Caco-2 (cell line): ENCODE measurements at regions of chr2 and their contacts with region 1.

Region 1: GRCh38 chr2:38274286-38275276 is 102.5 kb downstream of the ATL2 start:
- DNase-seq: peak in 1 of 2 experiments; percentile 69
- H3K4me3 ChIP-seq: no peak overlapping the region
- H3K4me3 Mint-ChIP-seq: no peak overlapping the region
- H3K27ac Mint-ChIP-seq: peak overlapping the region; percentile 70
- H3K4me1 ChIP-seq: peaks cover 44% of the 10 kb centered on the region
- H3K4me1 Mint-ChIP-seq: peaks cover 51% of the 10 kb centered on the region
- H3K27me3 ChIP-seq: no peaks in the 10 kb centered on the region
- H3K27me3 Mint-ChIP-seq: no peaks in the 10 kb centered on the region
- CTCF ChIP-seq: peak; percentile 62 to 69

Region 2: DNA sequence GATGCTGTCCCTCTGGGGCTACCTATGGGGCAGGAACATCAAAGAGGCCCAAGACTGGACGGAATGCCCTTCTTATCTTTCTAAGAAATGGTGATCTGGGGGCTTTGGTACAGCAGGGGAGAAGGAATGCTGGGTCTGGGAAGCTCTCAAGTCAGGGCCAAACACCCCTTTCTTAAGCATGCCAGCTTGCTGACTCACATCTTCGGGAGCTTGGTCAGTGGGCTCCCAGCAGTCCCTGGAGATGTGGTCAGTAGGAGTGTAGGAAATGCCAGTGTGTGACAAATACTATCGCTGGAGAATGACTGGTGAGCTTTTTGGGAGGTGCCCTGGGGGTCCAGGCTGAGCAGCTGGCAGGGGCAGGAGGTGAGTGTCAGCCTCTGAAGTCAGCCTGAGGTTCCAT is 498.1 kb before region 1 on chr2:
- CTCF ChIA-PET with region 1: no interaction called
- POLR2A ChIA-PET with region 1: interaction called, 12 read pairs
- intact Hi-C with region 1: no loop called
- DNase-seq: peak; percentile 29 to 65
- H3K4me3 ChIP-seq: no peak overlapping the region
- H3K4me3 Mint-ChIP-seq: no peak overlapping the region
- H3K27ac Mint-ChIP-seq: peak overlapping the region; percentile 58
- H3K4me1 ChIP-seq: peaks cover 70% of the 10 kb centered on the region
- H3K4me1 Mint-ChIP-seq: peaks cover 68% of the 10 kb centered on the region
- H3K27me3 ChIP-seq: no peaks in the 10 kb centered on the region
- H3K27me3 Mint-ChIP-seq: no peaks in the 10 kb centered on the region
- CTCF ChIP-seq: no peak

Region 3: DNA sequence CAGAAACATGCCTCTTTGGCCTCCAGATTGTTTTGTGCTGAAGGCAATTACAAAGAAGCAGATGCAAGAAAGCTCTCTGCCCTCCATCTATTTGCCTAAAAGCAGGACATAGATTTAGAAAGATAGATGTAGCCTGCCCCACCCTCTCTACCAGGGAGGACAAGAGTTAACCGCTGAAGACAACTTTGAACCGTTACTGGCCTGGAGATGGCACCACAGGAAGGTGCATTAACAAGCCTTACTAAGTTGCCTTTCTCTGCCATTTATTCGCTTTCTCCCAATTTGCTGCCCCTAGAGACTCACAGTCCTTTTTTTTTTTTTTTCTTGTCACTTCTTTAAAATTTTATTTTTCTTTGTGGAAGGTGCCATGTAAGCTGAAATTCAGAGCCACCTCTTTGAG is 378.3 kb before region 1 on chr2:
- CTCF ChIA-PET with region 1: interaction called, 3 read pairs
- POLR2A ChIA-PET with region 1: no interaction called
- intact Hi-C with region 1: loop called (anchors 1 kb)
- DNase-seq: peak in 1 of 2 experiments; percentile 14
- H3K4me3 ChIP-seq: no peak overlapping the region
- H3K4me3 Mint-ChIP-seq: no peak overlapping the region
- H3K27ac Mint-ChIP-seq: no peak overlapping the region
- H3K4me1 ChIP-seq: peaks cover 19% of the 10 kb centered on the region
- H3K4me1 Mint-ChIP-seq: peaks cover 10% of the 10 kb centered on the region
- H3K27me3 ChIP-seq: no peaks in the 10 kb centered on the region
- H3K27me3 Mint-ChIP-seq: no peaks in the 10 kb centered on the region
- CTCF ChIP-seq: no peak

Region 4: DNA sequence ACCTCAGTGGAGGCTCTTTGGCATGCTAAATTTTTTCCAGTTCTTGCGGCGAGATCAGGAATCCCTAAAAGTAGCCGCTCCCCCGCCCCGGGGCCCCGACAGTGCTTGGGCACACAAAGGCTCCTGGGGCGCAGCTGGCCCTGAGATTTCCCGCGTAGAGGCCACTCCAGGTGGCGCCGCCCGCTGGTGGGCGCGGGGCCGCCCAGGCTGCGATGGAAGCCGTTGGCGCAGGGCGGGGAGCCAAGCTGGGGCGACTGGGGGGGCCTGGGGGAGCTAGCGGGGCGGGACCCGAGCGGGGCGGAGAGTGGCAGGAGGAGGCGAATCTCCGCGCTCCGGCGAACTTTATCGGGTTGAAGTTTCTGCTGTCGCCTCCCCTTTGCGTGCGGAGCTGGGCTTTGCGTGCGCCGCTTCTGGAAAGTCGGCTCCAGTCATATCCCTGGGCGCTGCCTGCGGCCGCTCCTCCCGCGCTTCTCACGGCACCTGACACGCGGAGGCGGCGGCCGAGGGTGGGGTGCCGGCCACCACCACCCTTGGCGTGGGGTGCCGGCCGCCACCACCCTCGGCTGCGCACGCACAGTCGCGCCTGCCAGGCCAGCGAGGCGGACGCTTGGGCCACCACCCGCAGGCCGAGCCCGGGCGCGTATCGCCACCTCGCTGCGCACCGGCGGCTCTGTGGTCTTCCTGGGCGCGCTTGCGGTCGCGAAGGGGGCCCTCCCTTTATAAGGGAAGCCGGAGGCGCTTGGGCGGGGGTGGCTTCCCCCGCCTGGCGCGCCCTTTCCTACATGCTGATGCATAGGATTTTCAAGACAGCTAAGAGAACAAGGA is 197.8 kb before region 1 on chr2:
- CTCF ChIA-PET with region 1: interaction called, 37 read pairs
- POLR2A ChIA-PET with region 1: interaction called, 3 read pairs
- intact Hi-C with region 1: loop called (anchors 2 kb)
- DNase-seq: peak; percentile 79 to 84
- H3K4me3 ChIP-seq: peak overlapping the region; percentile 56
- H3K4me3 Mint-ChIP-seq: peak overlapping the region; percentile 84
- H3K27ac Mint-ChIP-seq: peak overlapping the region; percentile 76
- H3K4me1 ChIP-seq: peaks cover 24% of the 10 kb centered on the region
- H3K4me1 Mint-ChIP-seq: peaks cover 38% of the 10 kb centered on the region
- H3K27me3 ChIP-seq: no peaks in the 10 kb centered on the region
- H3K27me3 Mint-ChIP-seq: no peaks in the 10 kb centered on the region
- CTCF ChIP-seq: peak; percentile 1 to 53

Region 5: GRCh38 chr2:38115216-38116032 is 159.2 kb before region 1 on chr2:
- CTCF ChIA-PET with region 1: interaction called, 15 read pairs
- POLR2A ChIA-PET with region 1: no interaction called
- intact Hi-C with region 1: loop called (anchors 1 kb)
- DNase-seq: peak; percentile 86 to 90
- H3K4me3 ChIP-seq: no peak overlapping the region
- H3K4me3 Mint-ChIP-seq: no peak overlapping the region
- H3K27ac Mint-ChIP-seq: no peak overlapping the region
- H3K4me1 ChIP-seq: peaks cover 7% of the 10 kb centered on the region
- H3K4me1 Mint-ChIP-seq: peaks cover 6% of the 10 kb centered on the region
- H3K27me3 ChIP-seq: no peaks in the 10 kb centered on the region
- H3K27me3 Mint-ChIP-seq: no peaks in the 10 kb centered on the region
- CTCF ChIP-seq: peak; percentile 97 to 98

Region 6: DNA sequence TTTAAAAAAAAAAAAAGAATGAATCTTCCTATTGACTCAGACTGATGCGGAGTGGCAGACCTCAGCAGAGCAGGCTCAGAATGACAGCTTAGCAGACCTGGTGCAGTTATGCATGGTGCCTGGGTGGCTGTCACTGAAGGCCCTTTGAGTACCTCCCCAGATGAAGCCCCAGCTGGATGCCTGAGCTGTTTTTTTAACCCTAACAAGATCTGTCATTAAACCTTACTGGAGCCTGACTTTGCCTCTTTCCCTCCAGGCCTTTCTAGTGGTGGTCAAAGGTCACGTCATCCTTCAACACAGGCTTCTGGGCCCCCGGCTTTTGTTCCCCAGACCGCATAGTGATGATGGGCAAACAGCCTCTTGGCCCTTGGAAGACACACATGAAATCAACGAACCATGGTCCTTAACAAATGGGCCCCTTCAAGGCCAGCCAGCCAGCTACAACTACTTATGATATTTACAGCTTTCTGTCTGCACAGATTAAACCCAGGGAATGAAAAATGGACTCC is 60.3 kb before region 1 on chr2:
- CTCF ChIA-PET with region 1: interaction called, 3 read pairs
- POLR2A ChIA-PET with region 1: no interaction called
- intact Hi-C with region 1: loop called (anchors 5 kb)
- DNase-seq: peak; percentile 26 to 57
- H3K4me3 ChIP-seq: no peak overlapping the region
- H3K4me3 Mint-ChIP-seq: no peak overlapping the region
- H3K27ac Mint-ChIP-seq: no peak overlapping the region
- H3K4me1 ChIP-seq: peaks cover 10% of the 10 kb centered on the region
- H3K4me1 Mint-ChIP-seq: peaks cover 14% of the 10 kb centered on the region
- H3K27me3 ChIP-seq: no peaks in the 10 kb centered on the region
- H3K27me3 Mint-ChIP-seq: no peaks in the 10 kb centered on the region
- CTCF ChIP-seq: no peak